Breast epithelium (tissue), 4 donors: ENCODE measurements at regions of chr17 and their contacts with region 1.

Region 1: DNA sequence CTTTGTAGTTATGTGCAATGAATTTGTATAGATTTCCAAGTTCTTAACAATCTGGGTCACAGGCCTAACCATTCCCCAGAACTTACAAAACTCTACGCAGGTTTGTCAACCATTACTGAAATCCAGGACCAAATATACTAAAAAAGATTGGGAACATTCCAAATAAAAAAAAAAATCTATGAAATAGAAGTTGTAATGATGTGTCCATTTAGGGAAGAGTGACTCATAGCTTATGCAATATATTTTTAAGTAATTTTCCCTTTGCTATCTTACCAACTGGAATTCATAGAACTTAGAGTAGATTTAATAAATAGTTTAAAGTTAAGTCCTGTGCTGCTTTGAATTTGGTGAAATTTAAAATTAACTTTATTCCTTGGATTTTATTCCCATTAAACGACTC is 393.2 kb downstream of the PMP22 start:
- DNase-seq: no peak
- H3K4me3 ChIP-seq: no peak overlapping the region
- H3K27ac ChIP-seq: no peak overlapping the region
- H3K4me1 ChIP-seq: no peaks in the 10 kb centered on the region
- H3K27me3 ChIP-seq: no peaks in the 10 kb centered on the region
- CTCF ChIP-seq: no peak
- POLR2A ChIP-seq: no peak

Region 2: DNA sequence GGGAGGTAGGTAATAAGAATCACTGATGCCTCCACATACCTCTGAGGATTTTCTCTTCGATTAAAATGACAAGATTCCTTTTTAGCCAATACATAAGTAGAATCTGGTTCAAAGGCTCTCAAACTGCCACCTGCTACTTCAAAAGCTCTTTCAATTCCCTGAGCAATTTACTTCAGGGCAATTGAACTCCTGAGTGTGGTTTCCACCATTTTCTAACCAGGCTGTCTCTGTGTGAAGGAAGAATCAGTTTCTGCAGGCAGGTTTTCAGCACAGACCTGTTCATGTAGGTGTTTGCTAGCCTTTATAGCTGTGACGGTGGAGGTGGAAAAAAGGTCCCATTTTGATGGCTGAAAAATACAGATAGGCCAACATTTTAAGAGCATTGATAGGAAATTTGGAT is 589.2 kb before region 1 on chr17:
- intact Hi-C with region 1: no loop called
- DNase-seq: no peak
- H3K4me3 ChIP-seq: no peak overlapping the region
- H3K27ac ChIP-seq: no peak overlapping the region
- H3K4me1 ChIP-seq: no peaks in the 10 kb centered on the region
- H3K27me3 ChIP-seq: peaks cover 0 to 3% of the 10 kb centered on the region in 2 donors
- CTCF ChIP-seq: no peak
- POLR2A ChIP-seq: no peak

Region 3: GRCh38 chr17:14859542-14859941 is 12.4 kb before region 1 on chr17:
- intact Hi-C with region 1: no loop called
- DNase-seq: no peak
- H3K4me3 ChIP-seq: no peak overlapping the region
- H3K27ac ChIP-seq: no peak overlapping the region
- H3K4me1 ChIP-seq: no peaks in the 10 kb centered on the region
- H3K27me3 ChIP-seq: no peaks in the 10 kb centered on the region
- CTCF ChIP-seq: no peak
- POLR2A ChIP-seq: no peak

Region 4: DNA sequence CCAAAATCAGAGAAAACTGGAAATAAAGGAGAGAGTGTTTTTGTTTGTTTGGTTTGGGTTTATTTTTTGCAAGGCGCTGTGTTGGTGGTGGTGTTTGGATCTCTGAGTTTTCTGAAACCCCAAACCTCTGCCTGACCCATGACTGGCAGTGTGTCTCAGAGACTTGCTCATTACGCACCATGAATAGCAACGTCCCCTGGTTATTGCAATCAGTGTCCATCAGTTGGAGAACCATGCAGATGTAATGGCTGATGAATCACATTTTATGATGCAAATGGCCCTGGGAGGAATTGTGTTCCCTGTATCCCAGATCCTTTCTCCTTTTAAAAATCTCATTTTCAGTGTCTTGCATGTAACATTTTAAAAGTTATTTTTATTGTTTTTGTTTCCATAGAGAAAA is 30.4 kb after region 1 on chr17:
- intact Hi-C with region 1: no loop called
- DNase-seq: no peak
- H3K4me3 ChIP-seq: no peak overlapping the region
- H3K27ac ChIP-seq: no peak overlapping the region
- H3K4me1 ChIP-seq: no peaks in the 10 kb centered on the region
- H3K27me3 ChIP-seq: no peaks in the 10 kb centered on the region
- CTCF ChIP-seq: no peak
- POLR2A ChIP-seq: no peak

Region 5: GRCh38 chr17:14940108-14940945 is 68.4 kb after region 1 on chr17:
- intact Hi-C with region 1: no loop called
- DNase-seq: no peak
- H3K4me3 ChIP-seq: no peak overlapping the region
- H3K27ac ChIP-seq: peak overlapping the region in 1 of 2 donors; percentile 19
- H3K4me1 ChIP-seq: no peaks in the 10 kb centered on the region
- H3K27me3 ChIP-seq: peaks cover 0 to 9% of the 10 kb centered on the region in 2 donors
- CTCF ChIP-seq: no peak
- POLR2A ChIP-seq: no peak

Region 6: DNA sequence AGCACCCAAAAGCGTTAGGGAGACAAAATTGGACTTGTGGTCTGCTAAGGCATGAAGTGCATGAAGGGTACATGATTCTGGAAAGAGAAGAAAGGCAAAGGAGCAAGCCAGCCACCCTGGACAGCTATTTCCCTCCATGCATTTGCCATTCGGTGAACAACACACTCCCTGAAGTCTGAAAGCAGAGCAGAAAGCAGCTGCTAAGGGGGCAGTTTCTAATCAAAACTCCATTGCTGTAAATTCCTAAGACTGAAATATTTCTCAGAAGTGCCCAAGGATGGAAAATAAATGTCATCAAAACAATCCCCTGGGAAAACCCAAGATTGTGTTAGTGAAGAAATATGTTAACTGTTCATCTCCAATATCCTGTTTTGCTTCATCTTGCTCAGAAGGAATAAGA is 348.9 kb after region 1 on chr17:
- intact Hi-C with region 1: loop called (anchors 5 kb)
- DNase-seq: no peak
- H3K4me3 ChIP-seq: no peak overlapping the region
- H3K27ac ChIP-seq: peak overlapping the region in 1 of 2 donors; percentile 19
- H3K4me1 ChIP-seq: no peaks in the 10 kb centered on the region
- H3K27me3 ChIP-seq: no peaks in the 10 kb centered on the region
- CTCF ChIP-seq: no peak
- POLR2A ChIP-seq: no peak